Body of pancreas (tissue), 4 donors: ENCODE measurements at regions of chr17 and their contacts with region 1.

Region 1: DNA sequence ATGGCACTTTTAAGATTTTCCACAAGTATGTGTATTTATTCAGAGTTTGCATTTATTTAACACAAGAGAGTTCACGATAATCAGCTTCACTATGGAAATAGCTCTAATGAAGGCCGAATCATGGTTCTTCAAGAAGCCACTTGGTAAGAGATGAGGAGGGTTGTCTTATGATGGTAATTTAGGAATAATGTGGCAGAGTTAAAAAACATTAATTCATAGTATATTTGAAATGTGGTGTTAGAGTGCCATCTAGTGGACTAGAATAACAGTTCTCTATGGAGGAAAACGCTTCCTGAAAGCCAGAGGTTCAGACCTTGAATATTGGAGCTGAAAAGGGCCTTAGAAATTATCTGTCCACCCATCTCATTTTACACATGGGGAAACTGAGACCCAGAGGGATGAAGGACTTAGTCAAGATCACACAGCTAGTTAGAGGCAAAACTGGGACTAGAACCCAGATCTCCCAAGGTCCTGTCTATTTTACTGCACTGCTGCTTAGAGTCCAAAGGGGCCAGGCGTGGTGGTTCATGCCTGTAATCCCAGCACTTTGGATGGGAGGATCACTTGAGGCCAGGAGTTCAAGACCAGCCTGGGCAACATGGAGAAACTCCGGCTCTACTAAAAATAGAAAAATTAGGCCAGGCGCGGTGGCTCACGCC is 33.8 kb upstream of the KPNB1 start:
- DNase-seq: no peak
- ATAC-seq: peak; percentile 63
- H3K4me3 ChIP-seq: no peak overlapping the region
- H3K27ac ChIP-seq: no peak overlapping the region
- H3K4me1 ChIP-seq: peaks cover 25% of the 10 kb centered on the region
- H3K27me3 ChIP-seq: no peaks in the 10 kb centered on the region
- CTCF ChIP-seq: peak; percentile 35 to 86 (median 73)
- POLR2A ChIP-seq: no peak

Region 2: GRCh38 chr17:47229535-47230443 is 386.1 kb before region 1 on chr17:
- intact Hi-C with region 1: loop called (anchors 10 kb)
- DNase-seq: peak; percentile 82 to 91 (median 86)
- ATAC-seq: peak; percentile 93
- H3K4me3 ChIP-seq: no peak overlapping the region
- H3K27ac ChIP-seq: no peak overlapping the region
- H3K4me1 ChIP-seq: peaks cover 21% of the 10 kb centered on the region
- H3K27me3 ChIP-seq: no peaks in the 10 kb centered on the region
- CTCF ChIP-seq: peak; percentile 92 to 98 (median 96)
- POLR2A ChIP-seq: no peak

Region 3: DNA sequence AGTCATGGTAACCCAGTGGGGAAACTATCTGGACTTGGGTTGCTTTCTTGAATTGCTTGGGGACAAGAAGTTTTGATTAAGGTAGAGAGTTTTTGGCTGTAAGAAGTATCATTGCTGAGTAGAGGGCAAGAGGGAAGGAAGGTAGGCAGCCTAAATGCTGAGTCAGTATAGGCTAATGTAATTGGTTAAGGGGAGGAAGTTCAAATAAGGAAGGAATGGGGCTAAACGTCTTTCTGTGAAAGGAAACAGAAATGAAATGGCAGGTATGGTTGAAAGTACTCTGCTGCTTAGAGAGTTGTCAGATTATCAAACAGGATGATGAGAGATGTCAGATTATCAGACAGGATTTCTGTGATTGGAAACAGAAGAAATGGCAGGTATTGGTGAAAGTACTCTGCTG is 54.2 kb after region 1 on chr17:
- intact Hi-C with region 1: no loop called
- DNase-seq: no peak
- ATAC-seq: no peak
- H3K4me3 ChIP-seq: no peak overlapping the region
- H3K27ac ChIP-seq: no peak overlapping the region
- H3K4me1 ChIP-seq: no peaks in the 10 kb centered on the region
- H3K27me3 ChIP-seq: no peaks in the 10 kb centered on the region
- CTCF ChIP-seq: no peak
- POLR2A ChIP-seq: no peak